ENCODE measurements at regions of chr19 and their contacts with region 1.

Region 1: DNA sequence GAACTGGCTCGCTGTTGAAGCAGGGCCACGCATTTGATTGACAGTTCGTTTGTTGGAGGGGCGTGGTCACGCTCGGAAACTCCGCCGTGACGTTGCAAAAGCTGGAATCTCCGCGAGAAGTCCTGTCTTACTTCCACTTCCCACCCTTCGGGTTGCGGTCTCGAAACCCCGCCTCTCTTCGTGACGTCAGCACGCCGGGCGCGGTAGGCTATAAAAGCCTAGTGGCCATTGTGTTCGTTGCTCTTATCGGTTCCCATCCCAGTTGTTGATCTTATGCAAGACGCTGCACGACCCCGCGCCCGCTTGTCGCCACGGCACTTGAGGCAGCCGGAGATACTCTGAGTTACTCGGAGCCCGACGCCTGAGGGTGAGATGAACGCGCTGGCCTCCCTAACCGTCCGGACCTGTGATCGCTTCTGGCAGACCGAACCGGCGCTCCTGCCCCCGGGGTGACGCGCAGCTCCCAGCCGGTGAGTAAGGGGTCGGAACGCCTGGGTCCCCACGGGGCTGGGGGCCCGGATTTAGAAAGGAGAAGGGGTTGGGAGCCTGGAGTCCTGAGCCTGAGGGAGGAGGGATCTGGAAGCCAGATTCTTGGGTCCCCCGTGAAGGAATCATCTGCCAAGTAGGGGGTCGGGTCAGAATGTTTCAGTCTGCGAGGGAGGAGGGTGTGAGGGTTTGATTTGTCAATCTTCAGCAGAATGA is at the start of gene PPP1R15A:
- DNase-seq: peak; percentile 99
- H3K4me3 Mint-ChIP-seq: peak within 1 kb of the TSS; percentile 98
- H3K27ac Mint-ChIP-seq: peak within 1 kb of the TSS; percentile 100
- H3K4me1 Mint-ChIP-seq: peaks cover 38% of the 10 kb centered on the region
- H3K27me3 Mint-ChIP-seq: no peaks in the 10 kb centered on the region
- CTCF ChIP-seq: no peak
- total RNA-seq, gene PPP1R15A: 207 and 248 TPM in 2 replicates

Region 2: GRCh38 chr19:48812094-48812929 is 60.0 kb before region 1 on chr19:
- CTCF ChIA-PET with region 1: no interaction called
- POLR2A ChIA-PET with region 1: interaction called, 14 read pairs
- intact Hi-C with region 1: no loop called
- DNase-seq: peak; percentile 76
- H3K4me3 Mint-ChIP-seq: peak overlapping the region; percentile 75
- H3K27ac Mint-ChIP-seq: peak overlapping the region; percentile 51
- H3K4me1 Mint-ChIP-seq: peaks cover 38% of the 10 kb centered on the region
- H3K27me3 Mint-ChIP-seq: no peaks in the 10 kb centered on the region
- CTCF ChIP-seq: no peak

Region 3: DNA sequence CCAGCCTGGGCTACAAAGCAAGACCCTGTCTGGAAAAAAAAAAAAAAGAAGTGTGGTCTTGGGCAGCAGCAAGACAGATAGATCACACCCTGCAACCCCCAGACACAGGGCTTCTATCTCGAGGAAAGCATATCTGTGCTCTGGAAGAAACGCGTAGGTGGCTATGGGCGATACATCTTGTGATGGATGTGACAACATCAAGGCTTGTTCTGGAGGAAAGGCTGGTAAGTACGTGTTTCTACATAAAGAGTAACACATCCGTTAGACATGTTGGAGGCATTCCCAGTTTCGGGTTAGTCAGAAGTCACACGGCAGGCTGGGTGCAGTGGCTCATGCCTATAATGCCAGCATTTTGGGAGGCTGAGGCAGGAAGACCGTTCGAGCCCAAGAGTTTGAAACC is 54.6 kb after region 1 on chr19:
- CTCF ChIA-PET with region 1: no interaction called
- POLR2A ChIA-PET with region 1: interaction called, 14 read pairs
- intact Hi-C with region 1: no loop called
- DNase-seq: peak; percentile 99
- H3K4me3 Mint-ChIP-seq: no peak overlapping the region
- H3K27ac Mint-ChIP-seq: peak overlapping the region; percentile 65
- H3K4me1 Mint-ChIP-seq: no peaks in the 10 kb centered on the region
- H3K27me3 Mint-ChIP-seq: no peaks in the 10 kb centered on the region
- CTCF ChIP-seq: no peak

Region 4: DNA sequence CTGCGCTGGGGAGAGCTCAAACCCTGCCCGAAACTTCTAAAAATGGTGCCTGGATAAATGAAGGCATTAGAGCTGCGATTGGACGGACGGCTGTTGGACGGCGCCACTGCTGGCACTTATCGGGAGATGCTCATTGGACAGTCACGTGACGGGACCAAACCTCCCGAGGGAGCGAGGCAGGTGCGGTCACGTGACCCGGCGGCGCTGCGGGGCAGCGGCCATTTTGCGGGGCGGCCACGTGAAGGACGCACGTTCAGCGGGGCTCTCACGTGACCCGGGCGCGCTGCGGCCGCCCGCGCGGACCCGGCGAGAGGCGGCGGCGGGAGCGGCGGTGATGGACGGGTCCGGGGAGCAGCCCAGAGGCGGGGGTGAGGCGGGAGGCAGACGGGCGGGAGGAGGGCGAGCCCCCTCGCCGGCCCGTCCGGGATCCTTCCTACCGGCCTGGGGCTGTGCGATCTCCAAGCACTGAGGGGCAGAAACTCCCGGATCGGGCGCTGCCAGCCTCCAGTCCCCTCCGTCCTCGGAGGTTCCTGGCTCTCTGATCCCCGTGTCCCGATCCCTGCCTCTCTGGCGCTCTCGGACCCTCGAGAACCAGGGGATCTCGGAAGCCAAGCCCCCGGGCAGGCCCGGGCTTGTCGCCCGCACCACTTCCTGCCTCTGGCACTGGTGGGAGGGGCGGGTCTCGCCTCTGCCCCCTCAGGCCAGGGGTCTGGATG is 82.4 kb after region 1 on chr19 and contains the start of gene BAX:
- CTCF ChIA-PET with region 1: no interaction called
- POLR2A ChIA-PET with region 1: interaction called, 39 read pairs
- intact Hi-C with region 1: loop called (anchors 5 kb)
- DNase-seq: peak; percentile 98
- H3K4me3 Mint-ChIP-seq: peak within 1 kb of the TSS; percentile 81
- H3K27ac Mint-ChIP-seq: peak within 1 kb of the TSS; percentile 83
- H3K4me1 Mint-ChIP-seq: peaks cover 6% of the 10 kb centered on the region
- H3K27me3 Mint-ChIP-seq: no peaks in the 10 kb centered on the region
- CTCF ChIP-seq: no peak
- total RNA-seq, gene BAX: 130 and 152 TPM in 2 replicates

Region 5: DNA sequence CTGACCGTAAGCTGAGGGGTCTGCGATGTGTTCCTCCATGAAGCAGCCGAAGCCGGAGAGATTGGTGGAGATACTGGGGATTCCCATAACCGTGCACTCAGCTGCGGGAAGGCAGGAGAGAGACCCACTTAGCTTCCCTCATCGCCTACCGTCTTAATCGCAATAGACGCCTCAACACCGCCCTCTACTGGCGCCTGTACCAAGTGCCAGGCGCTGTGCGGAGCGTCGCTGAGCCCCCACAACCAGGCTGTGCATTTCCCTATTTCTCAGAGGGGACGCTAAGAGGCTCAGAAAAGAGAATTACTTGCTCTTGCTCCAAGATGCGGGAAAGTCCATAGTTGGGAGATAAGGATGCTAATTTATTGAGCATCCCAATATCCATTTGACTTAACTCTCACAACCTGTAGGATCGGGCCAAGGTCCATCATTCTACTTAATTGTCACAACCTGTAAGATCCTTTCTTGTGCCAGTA is 98.6 kb after region 1 on chr19:
- CTCF ChIA-PET with region 1: interaction called, 4 read pairs
- POLR2A ChIA-PET with region 1: interaction called, 49 read pairs
- intact Hi-C with region 1: no loop called
- DNase-seq: peak; percentile 75
- H3K4me3 Mint-ChIP-seq: no peak overlapping the region
- H3K27ac Mint-ChIP-seq: no peak overlapping the region
- H3K4me1 Mint-ChIP-seq: peaks cover 6% of the 10 kb centered on the region
- H3K27me3 Mint-ChIP-seq: no peaks in the 10 kb centered on the region
- CTCF ChIP-seq: peak; percentile 89

Region 6: DNA sequence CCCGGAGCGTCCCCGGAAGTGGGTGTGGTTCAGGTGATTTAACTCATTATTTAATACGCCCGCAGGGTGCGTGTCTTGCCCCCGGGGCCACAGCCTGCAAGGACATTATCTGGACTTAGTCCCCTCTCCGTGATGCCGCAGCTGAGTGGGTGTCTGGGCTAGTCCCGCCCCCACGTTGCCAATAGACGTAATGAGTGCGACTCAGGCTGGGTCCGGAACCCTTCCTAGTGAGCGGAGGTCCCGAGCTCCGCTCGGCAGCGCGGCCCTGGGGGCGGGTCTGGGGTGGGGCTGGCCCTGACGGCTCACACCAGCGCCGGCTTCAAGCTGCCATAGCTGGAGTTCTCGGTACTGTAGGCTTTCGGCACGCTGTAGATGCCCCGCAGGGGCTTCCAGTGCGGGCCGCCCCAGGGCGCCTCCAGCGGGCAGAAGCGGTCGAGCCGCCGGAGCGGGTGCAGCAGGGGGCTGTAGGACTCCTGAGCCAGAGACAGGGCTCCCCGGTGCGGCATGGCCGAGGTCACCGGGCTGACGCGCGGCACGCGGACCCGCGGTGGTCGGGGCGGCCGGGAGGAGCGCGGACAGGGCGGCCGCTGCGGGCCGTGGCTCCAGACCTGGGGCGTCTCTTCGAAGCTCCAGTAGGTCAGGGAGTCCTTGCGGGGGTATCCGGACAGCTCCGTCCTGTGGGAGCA is 145.5 kb after region 1 on chr19:
- CTCF ChIA-PET with region 1: no interaction called
- POLR2A ChIA-PET with region 1: no interaction called
- intact Hi-C with region 1: no loop called
- DNase-seq: no peak
- H3K4me3 Mint-ChIP-seq: no peak overlapping the region
- H3K27ac Mint-ChIP-seq: no peak overlapping the region
- H3K4me1 Mint-ChIP-seq: peaks cover 18% of the 10 kb centered on the region
- H3K27me3 Mint-ChIP-seq: no peaks in the 10 kb centered on the region
- CTCF ChIP-seq: peak; percentile 35

Region 7: DNA sequence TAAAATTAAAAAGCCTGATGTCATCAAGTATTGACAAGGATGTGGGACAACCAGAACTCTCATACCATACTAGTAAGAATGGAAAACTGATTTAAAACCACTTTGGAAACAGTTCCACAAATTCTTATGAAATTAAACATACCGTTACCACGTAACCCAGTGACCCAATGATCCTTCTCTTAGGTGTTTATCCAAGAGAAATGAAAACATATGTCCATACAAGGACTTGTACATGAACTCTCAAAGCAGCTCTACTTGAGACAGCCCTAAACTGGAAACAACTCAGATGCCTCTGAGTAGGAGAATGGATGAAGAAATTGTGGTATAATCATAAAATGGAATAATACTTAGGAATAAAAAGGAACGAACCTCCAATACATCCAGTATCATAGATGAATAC is 425.1 kb after region 1 on chr19:
- CTCF ChIA-PET with region 1: no interaction called
- POLR2A ChIA-PET with region 1: no interaction called
- intact Hi-C with region 1: no loop called
- DNase-seq: no peak
- H3K4me3 Mint-ChIP-seq: no peak overlapping the region
- H3K27ac Mint-ChIP-seq: no peak overlapping the region
- H3K4me1 Mint-ChIP-seq: no peaks in the 10 kb centered on the region
- H3K27me3 Mint-ChIP-seq: peaks cover 18% of the 10 kb centered on the region
- CTCF ChIP-seq: no peak